PC-3 (cell line): ENCODE measurements at regions of chr17 and their contacts with region 1.

Region 1: GRCh38 chr17:66165513-66166123 is 26.3 kb downstream of the CEP112 start:
- DNase-seq: peak; percentile 83
- ATAC-seq: peak; percentile 59
- H3K4me3 ChIP-seq: no peak overlapping the region
- H3K27ac ChIP-seq: no peak overlapping the region
- H3K4me1 ChIP-seq: no peaks in the 10 kb centered on the region
- H3K27me3 ChIP-seq: no peaks in the 10 kb centered on the region
- CTCF ChIP-seq: peak; percentile 95

Region 2: DNA sequence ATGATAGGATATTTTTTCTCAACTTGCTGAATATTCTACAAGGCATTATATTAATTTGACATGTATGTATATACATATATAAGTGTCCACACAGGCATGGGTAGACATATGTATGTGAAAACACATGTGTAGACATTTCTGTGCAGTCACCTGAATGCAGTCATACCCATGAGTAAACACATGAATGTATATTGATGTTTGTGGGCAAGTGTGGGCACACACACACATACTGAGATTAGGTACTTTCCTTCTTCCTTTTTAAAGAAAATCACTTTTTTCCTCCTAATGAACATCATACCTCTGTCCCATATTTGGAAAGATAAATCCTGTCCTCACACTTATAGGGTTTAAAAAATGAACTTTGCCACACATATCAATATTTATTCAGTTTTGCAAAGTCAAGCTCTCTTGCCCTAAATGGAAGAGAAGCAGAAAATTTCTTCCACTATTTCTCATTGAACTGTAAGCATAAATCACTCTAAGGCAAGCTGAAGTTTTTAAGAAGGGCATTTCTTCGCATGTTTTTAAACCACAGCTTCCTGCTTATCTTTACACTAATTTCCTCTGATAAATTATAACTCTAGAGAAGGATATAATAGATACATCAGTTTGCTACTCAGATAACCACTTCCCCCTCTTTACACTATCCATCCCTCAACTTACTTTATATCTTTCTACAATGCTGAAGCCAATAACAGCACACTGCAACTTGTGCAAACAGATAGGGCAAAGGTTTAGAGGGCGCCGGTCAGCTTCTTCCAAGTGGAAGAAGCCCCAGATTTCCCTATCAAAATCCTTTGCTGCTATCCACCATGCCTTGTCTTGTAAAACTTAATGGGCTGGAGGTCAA is 1196.7 kb before region 1 on chr17:
- CTCF ChIA-PET with region 1: no interaction called
- POLR2A ChIA-PET with region 1: no interaction called
- intact Hi-C with region 1: loop called (anchors 10 kb)
- DNase-seq: no peak
- ATAC-seq: no peak
- H3K4me3 ChIP-seq: no peak overlapping the region
- H3K27ac ChIP-seq: no peak overlapping the region
- H3K4me1 ChIP-seq: peaks cover 24% of the 10 kb centered on the region
- H3K27me3 ChIP-seq: no peaks in the 10 kb centered on the region
- CTCF ChIP-seq: no peak

Region 3: GRCh38 chr17:65278050-65278819 is 887.4 kb before region 1 on chr17:
- CTCF ChIA-PET with region 1: no interaction called
- POLR2A ChIA-PET with region 1: no interaction called
- intact Hi-C with region 1: loop called (anchors 1 kb)
- DNase-seq: peak; percentile 79
- ATAC-seq: peak; percentile 96
- H3K4me3 ChIP-seq: no peak overlapping the region
- H3K27ac ChIP-seq: no peak overlapping the region
- H3K4me1 ChIP-seq: peaks cover 7% of the 10 kb centered on the region; the same call in 1 of the 2 replicates
- H3K27me3 ChIP-seq: no peaks in the 10 kb centered on the region
- CTCF ChIP-seq: peak; percentile 95

Region 4: DNA sequence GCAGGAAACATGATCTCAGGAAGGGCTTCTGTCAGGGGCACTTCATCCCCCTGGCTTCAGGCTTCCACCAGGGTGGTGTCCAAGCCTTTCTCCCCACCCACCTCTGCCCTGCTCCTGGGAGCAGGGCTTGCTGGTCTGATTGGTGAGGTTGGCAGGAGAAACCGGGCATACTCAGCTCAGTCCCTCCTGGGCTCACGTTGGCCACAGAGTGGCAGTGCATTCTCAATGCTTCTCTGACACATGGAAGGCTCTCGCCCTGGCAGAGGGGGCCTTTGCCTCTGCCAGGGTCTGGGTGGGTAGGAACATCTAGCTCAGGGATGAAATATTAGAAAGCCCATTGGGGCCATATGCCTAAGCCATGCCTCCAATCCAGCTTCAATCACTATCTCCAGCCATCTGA is 747.0 kb before region 1 on chr17:
- CTCF ChIA-PET with region 1: interaction called, 3 read pairs
- POLR2A ChIA-PET with region 1: interaction called, 5 read pairs
- intact Hi-C with region 1: loop called (anchors 10 kb)
- DNase-seq: peak; percentile 20
- ATAC-seq: peak; percentile 76
- H3K4me3 ChIP-seq: no peak overlapping the region
- H3K27ac ChIP-seq: no peak overlapping the region
- H3K4me1 ChIP-seq: no peaks in the 10 kb centered on the region
- H3K27me3 ChIP-seq: no peaks in the 10 kb centered on the region
- CTCF ChIP-seq: peak; percentile 43; the same call in 1 of the 2 replicates

Region 5: DNA sequence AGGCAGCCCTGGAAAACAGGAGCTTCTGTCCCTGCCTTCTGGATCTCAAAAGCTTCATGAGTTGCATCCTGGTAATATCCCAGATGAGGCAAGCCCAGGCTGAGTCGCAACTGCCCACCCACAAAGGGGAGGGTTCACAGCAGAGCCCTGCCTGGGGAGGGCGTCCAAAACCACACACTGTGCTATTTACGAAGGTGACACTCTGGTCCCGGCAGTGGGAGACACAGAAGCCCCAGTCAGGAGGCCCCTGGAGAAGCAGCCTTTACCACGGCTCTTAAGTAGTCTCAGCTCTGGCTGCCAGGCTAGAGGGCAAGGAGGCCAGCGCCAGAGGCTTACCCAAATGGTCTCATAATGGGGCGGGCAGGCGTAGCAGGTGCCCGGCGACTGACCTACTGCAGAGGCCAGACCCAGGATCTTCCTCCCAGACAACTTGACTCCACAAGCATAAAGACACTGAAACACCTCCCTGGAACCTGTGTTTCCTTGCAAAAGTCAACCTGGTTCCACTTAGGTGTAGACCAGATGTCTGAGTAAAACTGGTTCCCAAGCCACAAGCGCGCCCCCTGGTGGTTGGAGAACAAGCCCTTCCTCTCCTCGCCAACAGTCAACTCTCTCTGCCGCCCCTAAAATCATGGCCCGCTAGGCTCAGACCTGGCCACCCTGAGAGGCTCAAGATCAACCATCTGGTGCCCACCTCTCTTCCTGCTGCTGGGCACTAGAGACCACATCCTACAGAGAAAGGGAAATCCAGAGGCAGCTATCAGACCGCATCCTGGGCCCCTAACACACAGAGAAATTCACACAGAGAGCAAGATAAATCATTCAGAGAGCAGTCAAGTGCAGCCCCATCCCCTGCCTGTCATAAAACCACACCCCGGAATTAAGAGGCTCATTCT is 609.4 kb before region 1 on chr17:
- CTCF ChIA-PET with region 1: no interaction called
- POLR2A ChIA-PET with region 1: no interaction called
- intact Hi-C with region 1: loop called (anchors 1 kb)
- DNase-seq: peak; percentile 80
- ATAC-seq: peak; percentile 9; the same call in 1 of the 2 replicates
- H3K4me3 ChIP-seq: no peak overlapping the region
- H3K27ac ChIP-seq: no peak overlapping the region
- H3K4me1 ChIP-seq: 0 out of 2 replicates have a peak, but pooled peaks cover 3% of the 10 kb centered on the region
- H3K27me3 ChIP-seq: peaks cover 10% of the 10 kb centered on the region
- CTCF ChIP-seq: peak; percentile 96

Region 6: GRCh38 chr17:66032082-66032712 is 133.4 kb before region 1 on chr17:
- CTCF ChIA-PET with region 1: no interaction called
- POLR2A ChIA-PET with region 1: no interaction called
- intact Hi-C with region 1: no loop called
- DNase-seq: no peak
- ATAC-seq: no peak
- H3K4me3 ChIP-seq: no peak overlapping the region
- H3K27ac ChIP-seq: no peak overlapping the region
- H3K4me1 ChIP-seq: no peaks in the 10 kb centered on the region
- H3K27me3 ChIP-seq: no peaks in the 10 kb centered on the region
- CTCF ChIP-seq: no peak

Region 7: DNA sequence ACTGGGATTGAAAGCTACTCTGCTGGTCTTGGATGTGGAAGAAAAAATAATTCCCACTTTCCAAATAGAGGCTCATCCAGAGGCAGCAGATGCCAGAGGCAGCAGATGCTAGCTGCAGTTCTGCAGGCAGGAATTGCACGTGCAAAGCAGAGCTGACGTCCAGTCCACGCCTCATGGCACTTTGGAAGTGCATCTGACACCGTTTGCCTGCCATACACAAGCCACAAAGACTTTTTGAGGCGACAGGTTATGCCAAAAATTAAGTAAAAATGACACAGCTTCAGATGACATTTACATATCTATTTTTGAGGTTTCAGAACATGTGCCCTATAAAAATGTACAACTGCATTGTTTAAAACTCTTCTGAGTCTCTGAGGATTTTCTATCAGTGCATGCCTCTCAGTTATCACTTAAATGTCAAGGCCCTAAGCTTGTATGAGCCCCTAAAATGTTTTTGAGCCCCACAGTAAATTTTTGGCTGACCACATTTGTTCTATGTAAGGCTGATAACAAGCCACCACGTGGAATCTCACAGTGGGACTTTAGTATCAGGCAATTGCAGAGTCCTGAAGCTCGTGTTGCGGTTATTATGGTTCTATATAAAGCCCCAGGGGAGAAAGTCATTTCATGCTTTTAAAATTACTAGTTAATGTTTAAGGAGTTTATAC is 376.0 kb after region 1 on chr17:
- CTCF ChIA-PET with region 1: no interaction called
- POLR2A ChIA-PET with region 1: no interaction called
- intact Hi-C with region 1: no loop called
- DNase-seq: peak; percentile 86
- ATAC-seq: peak; percentile 62
- H3K4me3 ChIP-seq: no peak overlapping the region
- H3K27ac ChIP-seq: peak overlapping the region; percentile 89
- H3K4me1 ChIP-seq: peaks cover 53% of the 10 kb centered on the region
- H3K27me3 ChIP-seq: no peaks in the 10 kb centered on the region
- CTCF ChIP-seq: no peak